ENCODE measurements at regions of chr18 and their contacts with region 1.

Region 1: DNA sequence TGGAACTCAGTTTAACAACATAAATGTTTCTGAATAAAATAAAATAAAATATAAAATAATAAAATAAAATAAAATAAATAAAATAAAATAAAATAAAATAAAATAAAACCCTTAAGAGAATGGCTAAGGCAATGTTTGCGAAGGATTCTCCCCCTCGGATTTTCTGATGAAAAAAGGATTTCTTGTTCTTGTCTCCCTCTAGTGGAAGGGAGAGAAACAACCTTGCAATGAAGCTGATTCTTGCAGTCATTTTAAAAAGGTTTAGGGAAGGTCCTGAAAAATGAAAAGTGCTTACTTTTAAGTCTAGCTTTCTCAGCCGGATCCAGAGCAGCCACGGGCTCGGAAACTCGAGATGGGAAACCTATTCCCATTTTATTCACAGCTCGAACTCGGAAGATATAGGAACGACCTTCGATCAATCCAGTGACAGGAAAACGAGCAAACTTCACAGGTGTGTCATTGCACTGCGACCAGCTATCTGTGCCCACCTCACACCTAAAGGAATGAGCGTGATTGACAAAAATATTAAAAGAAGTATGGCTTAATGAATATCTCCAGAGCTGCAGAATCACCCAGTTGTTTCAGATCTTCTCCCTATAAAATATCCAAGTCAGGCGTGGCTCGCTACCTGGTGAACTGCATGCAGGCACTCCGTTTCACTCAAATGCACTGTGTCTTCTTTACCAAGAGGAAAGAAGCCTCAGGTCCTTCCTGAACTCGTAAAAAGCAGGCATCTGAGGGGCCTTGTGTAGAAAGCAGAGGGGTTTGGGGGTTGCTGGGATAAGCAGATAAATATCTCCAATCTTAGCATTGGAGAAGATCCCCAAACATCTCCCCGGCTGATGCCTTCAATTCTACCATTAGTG is 68.1 kb downstream of the MYOM1 start:
- DNase-seq: no peak
- H3K4me3 ChIP-seq: no peak overlapping the region
- H3K27ac ChIP-seq: no peak overlapping the region
- H3K4me1 ChIP-seq: peaks cover 0 to 21% (median 3%) of the 10 kb centered on the region in 6 donors
- H3K27me3 ChIP-seq: no peaks in the 10 kb centered on the region
- CTCF ChIP-seq: peak; percentile 43 to 85 (median 69)
- POLR2A ChIP-seq: no peak

Region 2: DNA sequence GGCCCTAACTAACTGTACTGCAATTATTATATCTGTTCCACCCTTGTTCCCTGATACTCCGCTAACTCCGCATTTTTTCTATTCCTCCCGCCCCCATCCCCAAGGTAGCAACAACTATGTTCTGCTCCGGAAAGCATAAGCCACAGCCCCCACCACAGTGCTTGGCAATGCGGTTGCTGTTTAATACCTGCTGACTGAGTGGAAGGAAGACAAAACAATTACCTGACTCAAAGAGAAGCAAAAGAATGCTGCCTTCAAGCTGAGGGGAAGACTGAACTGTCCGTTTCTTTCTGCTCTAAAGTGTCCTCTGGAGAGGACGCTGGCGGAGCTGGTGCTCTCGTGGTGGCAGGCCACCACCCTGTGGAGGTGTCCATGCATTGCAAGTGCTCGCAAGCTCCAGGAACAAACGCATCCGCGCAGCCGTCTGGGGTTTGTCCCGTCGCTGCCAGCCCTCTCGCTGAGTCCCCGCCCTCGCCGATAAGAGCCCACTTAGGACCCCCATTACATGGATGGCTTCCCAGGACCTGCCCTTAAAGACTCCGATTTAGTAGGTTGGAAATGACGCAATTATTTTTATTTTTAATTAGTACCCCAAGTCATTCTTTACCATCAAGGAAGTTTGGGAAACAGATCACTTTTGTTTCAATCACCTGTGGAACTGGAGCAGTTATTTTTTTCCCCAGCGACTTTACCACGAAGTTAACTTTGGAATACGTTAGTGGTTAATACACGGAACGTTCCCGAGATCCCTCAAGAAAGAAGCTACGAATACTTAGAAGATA is 94.4 kb after region 1 on chr18:
- intact Hi-C with region 1: loop called (anchors 10 kb)
- DNase-seq: peak; percentile 98
- H3K4me3 ChIP-seq: peak overlapping the region; percentile 72 to 98 (median 94)
- H3K27ac ChIP-seq: peak overlapping the region; percentile 96 to 100 (median 100)
- H3K4me1 ChIP-seq: peaks cover 28 to 59% (median 49%) of the 10 kb centered on the region in 6 donors
- H3K27me3 ChIP-seq: no peaks in the 10 kb centered on the region
- CTCF ChIP-seq: peak; percentile 82 to 99 (median 95)
- POLR2A ChIP-seq: no peak